Breast epithelium (tissue), 4 donors: ENCODE measurements at regions of chr9 and their contacts with region 1.

Region 1: DNA sequence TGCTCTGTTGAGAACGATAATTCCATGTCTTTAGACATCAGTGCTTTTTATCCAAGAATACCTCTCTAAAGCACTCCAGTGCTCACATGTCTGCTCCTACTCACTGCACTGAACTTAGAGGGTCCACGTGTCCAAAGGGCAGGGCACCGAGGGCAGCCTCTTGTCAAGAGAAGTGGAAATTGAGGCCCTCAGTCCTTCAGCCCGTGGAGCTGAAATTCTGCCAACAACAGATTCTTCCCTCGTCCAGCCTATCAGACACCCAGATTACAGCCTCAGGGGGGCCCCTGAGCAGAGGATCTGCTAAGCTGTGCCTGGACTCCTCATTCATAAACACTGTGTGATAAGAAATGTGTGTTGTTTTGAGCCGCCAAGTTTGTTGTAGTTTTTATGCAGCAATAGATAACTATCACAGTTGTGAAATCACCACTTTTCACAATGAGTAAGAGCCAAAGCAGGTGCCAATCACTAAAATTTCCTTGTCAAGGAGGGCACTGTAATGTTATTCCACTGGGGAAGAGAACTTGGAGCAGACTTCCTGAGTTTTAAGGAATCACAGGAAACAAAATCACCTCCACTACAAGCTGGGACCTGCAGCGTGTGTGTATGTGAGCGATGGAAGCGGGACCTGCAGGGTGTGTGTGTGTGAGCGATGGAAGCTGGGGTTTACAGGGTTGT is 58.8 kb upstream of the IGFBPL1 start:
- DNase-seq: no peak
- H3K4me3 ChIP-seq: no peak overlapping the region
- H3K27ac ChIP-seq: no peak overlapping the region
- H3K4me1 ChIP-seq: no peaks in the 10 kb centered on the region
- H3K27me3 ChIP-seq: no peaks in the 10 kb centered on the region
- CTCF ChIP-seq: no peak
- POLR2A ChIP-seq: no peak

Region 2: DNA sequence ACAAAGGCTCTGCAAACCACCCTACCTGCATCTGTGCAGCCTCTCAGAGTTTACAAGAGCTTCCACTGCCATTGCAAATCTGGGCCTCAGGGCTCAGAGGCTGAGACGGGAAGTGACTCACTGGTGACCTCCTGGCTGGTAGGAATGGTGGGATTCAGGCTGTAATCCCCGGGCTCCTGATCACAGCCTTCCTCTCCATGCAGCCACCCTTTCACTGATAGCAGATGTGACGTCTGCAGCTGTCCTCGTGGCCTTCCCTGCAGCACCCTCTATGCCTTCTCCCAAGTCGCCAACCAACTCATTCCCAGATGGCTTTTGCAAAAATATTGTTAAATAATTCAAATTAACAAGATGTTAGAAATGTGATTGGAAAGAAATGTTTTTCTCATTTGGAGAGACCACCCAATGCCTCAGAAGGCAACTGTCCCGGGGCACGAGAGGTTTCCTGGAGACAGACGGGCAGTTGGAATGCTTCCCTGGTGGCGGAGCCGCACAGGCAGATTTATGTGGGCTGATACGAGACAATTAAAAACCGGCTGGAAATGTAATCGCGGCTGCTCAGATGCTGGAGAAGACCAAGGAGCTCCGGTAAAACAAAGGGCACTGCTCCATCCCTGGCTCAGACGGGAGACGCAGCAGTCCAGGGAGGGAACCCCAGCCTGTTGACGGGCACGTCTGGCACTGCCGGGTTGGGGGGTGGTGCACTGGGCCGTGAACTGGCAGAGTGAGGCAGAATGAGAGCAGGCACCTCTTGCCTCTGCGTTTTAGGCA is 544.7 kb before region 1 on chr9:
- intact Hi-C with region 1: no loop called
- DNase-seq: no peak
- H3K4me3 ChIP-seq: no peak overlapping the region
- H3K27ac ChIP-seq: no peak overlapping the region
- H3K4me1 ChIP-seq: peaks cover 2 to 8% of the 10 kb centered on the region in 2 donors
- H3K27me3 ChIP-seq: no peaks in the 10 kb centered on the region
- CTCF ChIP-seq: no peak
- POLR2A ChIP-seq: no peak

Region 3: GRCh38 chr9:38117651-38118050 is 365.4 kb before region 1 on chr9:
- intact Hi-C with region 1: loop called (anchors 5 kb)
- DNase-seq: no peak
- H3K4me3 ChIP-seq: no peak overlapping the region
- H3K27ac ChIP-seq: no peak overlapping the region
- H3K4me1 ChIP-seq: no peaks in the 10 kb centered on the region
- H3K27me3 ChIP-seq: no peaks in the 10 kb centered on the region
- CTCF ChIP-seq: no peak
- POLR2A ChIP-seq: no peak

Region 4: DNA sequence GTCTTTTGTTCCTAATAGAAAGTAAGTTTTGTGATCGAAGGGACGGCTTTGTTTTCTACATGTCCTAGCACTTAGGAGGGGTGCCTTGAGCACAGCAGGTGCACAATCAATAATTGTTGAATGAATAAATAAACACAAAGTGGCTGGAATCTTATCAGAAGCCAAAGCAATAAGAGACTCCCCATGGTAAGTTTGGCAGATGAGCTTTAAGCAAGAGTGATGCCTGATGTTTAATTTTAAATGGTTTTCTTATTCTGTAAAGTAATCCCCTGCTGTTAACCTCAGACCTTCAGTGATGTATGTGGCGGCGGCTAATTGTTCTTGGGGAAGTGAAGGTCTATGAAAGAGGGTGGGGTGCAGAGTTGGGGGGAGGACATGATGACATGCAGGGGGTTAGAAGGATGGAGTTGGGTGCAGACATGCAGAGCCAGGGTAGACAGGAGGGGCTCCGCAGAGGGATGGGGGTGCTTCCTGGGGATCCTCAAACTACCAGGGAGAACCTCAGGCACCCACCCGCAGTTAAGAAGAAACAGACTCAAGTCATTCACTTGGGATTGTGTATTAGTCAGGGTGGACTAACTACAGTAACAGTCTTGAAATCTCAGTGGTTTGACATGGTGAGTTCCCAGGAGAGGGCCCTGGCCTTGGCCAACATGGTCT is 348.3 kb before region 1 on chr9:
- intact Hi-C with region 1: loop called (anchors 5 kb)
- DNase-seq: no peak
- H3K4me3 ChIP-seq: no peak overlapping the region
- H3K27ac ChIP-seq: no peak overlapping the region
- H3K4me1 ChIP-seq: no peaks in the 10 kb centered on the region
- H3K27me3 ChIP-seq: no peaks in the 10 kb centered on the region
- CTCF ChIP-seq: no peak
- POLR2A ChIP-seq: no peak

Region 5: DNA sequence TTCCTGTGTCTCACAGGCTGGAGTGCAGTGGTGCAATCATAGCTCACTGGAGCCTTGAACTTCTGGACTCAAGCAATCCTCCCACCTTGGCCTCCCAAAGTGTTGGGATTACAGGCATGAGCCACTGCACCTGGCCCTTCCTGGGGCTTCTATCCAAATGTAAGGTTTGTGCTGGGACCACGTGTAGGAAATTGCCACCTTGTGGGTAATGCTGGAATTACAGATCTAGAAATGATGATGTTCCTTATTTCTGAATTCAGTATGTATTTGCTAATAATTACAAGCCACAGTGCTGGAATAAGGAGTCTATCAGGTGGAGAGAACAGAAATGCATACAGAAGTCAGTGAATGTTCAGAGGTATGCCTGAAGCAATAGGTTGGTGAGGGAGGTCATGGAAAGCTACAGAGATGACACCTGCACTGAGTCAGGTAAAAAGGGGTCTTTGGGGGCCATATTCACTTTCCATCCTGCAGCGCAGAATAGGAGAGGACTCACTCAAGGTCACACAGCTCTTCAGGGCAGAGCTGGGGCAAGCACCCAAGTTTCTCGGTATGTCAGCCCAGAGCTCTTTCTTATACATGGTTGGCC is 50.0 kb before region 1 on chr9:
- intact Hi-C with region 1: no loop called
- DNase-seq: no peak
- H3K4me3 ChIP-seq: no peak overlapping the region
- H3K27ac ChIP-seq: no peak overlapping the region
- H3K4me1 ChIP-seq: no peaks in the 10 kb centered on the region
- H3K27me3 ChIP-seq: no peaks in the 10 kb centered on the region
- CTCF ChIP-seq: peak; percentile 45 to 55 (median 52)
- POLR2A ChIP-seq: no peak

Region 6: DNA sequence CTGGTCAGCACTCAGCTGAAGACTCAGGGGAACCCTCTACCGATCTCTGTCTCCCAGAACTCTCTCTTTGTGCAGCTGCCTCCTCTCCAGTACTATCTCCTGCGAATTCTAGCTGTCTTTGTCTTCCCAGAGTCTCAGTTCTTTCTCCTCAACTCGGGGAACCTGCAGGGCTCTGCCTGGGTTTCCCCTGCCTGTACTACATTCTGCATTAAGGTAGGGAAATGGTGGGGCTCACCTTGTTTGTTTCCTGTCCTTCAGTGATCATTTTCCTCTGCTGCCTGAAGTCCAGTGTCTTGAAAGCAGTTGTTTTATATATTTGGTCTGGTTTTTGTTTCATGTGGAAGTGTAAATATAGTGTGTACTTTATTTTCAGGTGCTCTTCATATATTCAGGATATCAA is 15.7 kb before region 1 on chr9:
- intact Hi-C with region 1: no loop called
- DNase-seq: no peak
- H3K4me3 ChIP-seq: no peak overlapping the region
- H3K27ac ChIP-seq: no peak overlapping the region
- H3K4me1 ChIP-seq: no peaks in the 10 kb centered on the region
- H3K27me3 ChIP-seq: no peaks in the 10 kb centered on the region
- CTCF ChIP-seq: no peak
- POLR2A ChIP-seq: no peak